ENCODE measurements at regions of chr1 and their contacts with region 1.

Region 1: GRCh38 chr1:65067491-65068201 is 80.4 kb upstream of the AK4 start:
- DNase-seq: peak; percentile 56
- ATAC-seq: peak; percentile 30
- H3K4me3 ChIP-seq: peak overlapping the region; percentile 58
- H3K27ac ChIP-seq: peak overlapping the region; percentile 51
- H3K4me1 ChIP-seq: peaks cover 4% of the 10 kb centered on the region; the same call in 1 of the 2 replicates
- H3K27me3 ChIP-seq: peaks cover 5% of the 10 kb centered on the region; the same call in 1 of the 2 replicates
- CTCF ChIP-seq: no peak
- POLR2A ChIP-seq: no peak
- RAD21 ChIP-seq: no peak

Region 2: DNA sequence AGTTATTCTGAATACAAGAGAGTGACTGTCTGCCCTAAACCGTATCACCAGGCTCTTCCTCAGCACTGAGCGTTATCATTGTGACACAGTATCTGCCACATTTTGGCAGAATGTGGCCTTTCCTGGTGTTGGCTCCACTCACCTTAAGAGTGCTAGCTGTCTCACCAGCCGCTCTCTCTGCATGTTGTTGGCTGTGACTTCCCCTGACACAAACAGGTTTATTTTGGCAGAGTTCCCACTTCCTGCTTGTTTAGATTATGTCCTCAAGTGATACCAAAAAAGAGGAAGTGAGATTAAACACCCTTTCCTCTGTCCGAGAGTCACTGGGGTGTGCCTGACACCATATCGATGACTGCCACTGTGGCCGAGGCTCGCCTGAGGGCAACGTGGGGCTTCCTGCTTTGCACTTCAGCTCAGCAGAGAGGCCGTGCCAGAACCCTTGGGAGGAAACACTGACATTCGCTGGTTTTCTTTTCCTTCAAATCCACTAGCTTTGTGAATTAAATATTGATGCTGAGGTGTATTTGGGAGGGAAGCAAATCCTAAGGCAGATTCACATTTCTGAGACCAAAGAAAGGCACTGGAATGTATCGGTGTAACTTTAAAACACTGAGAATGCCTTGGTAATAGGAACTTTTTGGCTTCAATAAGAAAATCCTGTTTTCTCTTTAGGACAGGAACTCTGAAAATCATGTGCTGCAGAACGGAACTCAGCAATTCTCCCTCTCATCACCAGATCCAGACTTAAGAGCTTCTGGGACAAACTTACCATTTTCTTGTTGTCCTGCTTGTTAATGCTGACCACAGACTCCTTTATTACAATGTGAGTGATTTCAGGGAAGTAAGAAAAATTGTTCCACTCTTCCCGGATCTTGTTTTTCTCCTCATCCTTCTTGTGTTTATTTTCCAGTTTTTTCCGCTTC is 203.4 kb before region 1 on chr1:
- CTCF ChIA-PET with region 1: no interaction called
- POLR2A ChIA-PET with region 1: no interaction called
- dilution Hi-C with region 1: no loop called
- in situ Hi-C with region 1: no loop called
- intact Hi-C with region 1: loop called (anchors 5 kb)
- DNase-seq: no peak
- ATAC-seq: no peak
- H3K4me3 ChIP-seq: no peak overlapping the region
- H3K27ac ChIP-seq: no peak overlapping the region
- H3K4me1 ChIP-seq: no peaks in the 10 kb centered on the region
- H3K27me3 ChIP-seq: no peaks in the 10 kb centered on the region
- CTCF ChIP-seq: no peak
- POLR2A ChIP-seq: no peak
- RAD21 ChIP-seq: no peak

Region 3: GRCh38 chr1:65108025-65108642 is 40.5 kb after region 1 on chr1:
- CTCF ChIA-PET with region 1: no interaction called
- POLR2A ChIA-PET with region 1: no interaction called
- dilution Hi-C with region 1: no loop called
- in situ Hi-C with region 1: no loop called
- intact Hi-C with region 1: no loop called
- DNase-seq: no peak
- ATAC-seq: no peak
- H3K4me3 ChIP-seq: no peak overlapping the region
- H3K27ac ChIP-seq: no peak overlapping the region
- H3K4me1 ChIP-seq: no peaks in the 10 kb centered on the region
- H3K27me3 ChIP-seq: peaks cover 1% of the 10 kb centered on the region; the same call in 1 of the 2 replicates
- CTCF ChIP-seq: no peak
- POLR2A ChIP-seq: no peak
- RAD21 ChIP-seq: no peak

Region 4: DNA sequence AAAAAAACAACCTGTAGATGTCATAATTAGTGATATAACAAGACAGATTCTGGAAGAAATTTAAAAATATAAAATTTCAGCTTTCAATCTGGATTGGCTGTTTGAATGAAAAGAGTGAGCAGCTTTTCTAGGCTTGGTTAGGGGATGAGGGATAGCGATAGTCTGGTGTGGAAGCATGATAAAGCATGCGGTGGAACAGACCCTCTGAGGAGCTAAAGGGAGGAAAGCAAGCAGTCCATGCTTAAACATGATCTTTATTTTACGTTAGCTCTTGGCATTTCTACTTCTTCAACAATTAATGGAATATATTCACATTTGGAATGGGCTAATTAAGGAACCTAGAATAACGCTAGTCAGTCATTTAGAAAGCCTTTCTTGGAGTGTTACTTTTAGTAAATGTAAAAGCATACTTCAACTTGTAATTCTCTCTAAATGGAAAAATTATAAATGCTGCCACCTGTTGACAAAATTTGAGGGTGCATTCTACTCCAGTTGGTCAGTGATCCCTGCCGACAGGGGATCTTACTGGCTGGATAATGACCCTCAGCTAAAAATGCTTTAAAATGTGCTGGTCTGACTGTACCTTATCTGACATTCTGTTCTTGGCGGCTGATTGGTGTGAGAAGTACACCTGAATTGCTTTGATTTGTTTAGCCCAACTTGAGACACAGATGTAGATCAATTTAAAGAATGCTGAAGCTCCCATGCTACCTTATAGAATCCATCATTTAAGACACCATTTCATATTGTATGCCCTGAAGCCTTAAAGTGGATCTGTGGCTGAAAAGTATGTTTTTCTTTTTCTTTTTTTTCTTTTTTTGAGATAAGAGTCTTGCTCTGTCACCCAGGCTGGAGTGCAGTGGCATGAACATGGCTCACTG is 141.6 kb after region 1 on chr1:
- CTCF ChIA-PET with region 1: interaction called, 3 read pairs
- POLR2A ChIA-PET with region 1: no interaction called
- dilution Hi-C with region 1: no loop called
- in situ Hi-C with region 1: loop called (anchors 5 kb)
- intact Hi-C with region 1: no loop called
- DNase-seq: peak; percentile 47
- ATAC-seq: peak; percentile 81
- H3K4me3 ChIP-seq: no peak overlapping the region
- H3K27ac ChIP-seq: no peak overlapping the region
- H3K4me1 ChIP-seq: no peaks in the 10 kb centered on the region; the same call in 1 of the 2 replicates
- H3K27me3 ChIP-seq: no peaks in the 10 kb centered on the region
- CTCF ChIP-seq: peak; percentile 62
- POLR2A ChIP-seq: no peak
- RAD21 ChIP-seq: peak; percentile 47

Region 5: GRCh38 chr1:65419681-65420589 is 352.3 kb after region 1 on chr1:
- CTCF ChIA-PET with region 1: no interaction called
- POLR2A ChIA-PET with region 1: no interaction called
- dilution Hi-C with region 1: no loop called
- in situ Hi-C with region 1: loop called (anchors 10 kb)
- intact Hi-C with region 1: no loop called
- DNase-seq: peak; percentile 97
- ATAC-seq: peak; percentile 95
- H3K4me3 ChIP-seq: peak overlapping the region; percentile 67
- H3K27ac ChIP-seq: peak overlapping the region; percentile 78
- H3K4me1 ChIP-seq: peaks cover 12% of the 10 kb centered on the region
- H3K27me3 ChIP-seq: no peaks in the 10 kb centered on the region
- CTCF ChIP-seq: no peak
- POLR2A ChIP-seq: no peak
- RAD21 ChIP-seq: no peak

Region 6: DNA sequence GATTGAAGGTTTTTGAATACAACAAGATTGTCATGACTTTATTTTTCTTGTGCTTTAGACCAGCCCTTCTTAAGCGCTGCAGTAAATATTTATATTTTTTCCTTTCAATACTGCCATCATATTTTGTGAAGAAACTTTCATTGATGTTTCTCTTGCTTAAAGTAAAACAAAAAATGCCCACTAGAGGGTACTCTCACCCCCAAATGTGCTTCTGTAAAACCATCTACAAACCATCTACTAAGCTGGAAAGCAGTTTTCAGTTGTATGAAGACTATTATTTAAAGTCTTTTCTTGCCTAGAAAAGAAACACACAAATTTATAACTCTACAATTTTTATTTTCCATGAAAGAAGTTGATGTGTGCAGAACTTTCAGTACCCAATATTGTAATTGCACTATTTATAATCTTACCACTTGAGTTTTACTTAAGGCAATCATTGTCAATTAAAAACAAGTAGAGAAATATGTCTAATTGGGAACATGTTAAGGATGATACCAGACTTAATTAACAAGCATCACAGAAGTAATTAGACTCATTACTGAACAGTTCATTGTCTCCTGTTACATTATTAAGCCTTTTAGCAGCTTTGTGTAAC is 363.6 kb after region 1 on chr1:
- CTCF ChIA-PET with region 1: no interaction called
- POLR2A ChIA-PET with region 1: no interaction called
- dilution Hi-C with region 1: no loop called
- in situ Hi-C with region 1: loop called (anchors 10 kb)
- intact Hi-C with region 1: loop called (anchors 5 kb)
- DNase-seq: peak; percentile 55
- ATAC-seq: peak; percentile 53
- H3K4me3 ChIP-seq: no peak overlapping the region
- H3K27ac ChIP-seq: no peak overlapping the region
- H3K4me1 ChIP-seq: peaks cover 2% of the 10 kb centered on the region; the same call in 1 of the 2 replicates
- H3K27me3 ChIP-seq: no peaks in the 10 kb centered on the region
- CTCF ChIP-seq: peak; percentile 59
- POLR2A ChIP-seq: no peak
- RAD21 ChIP-seq: peak; percentile 62

Measured in IMR-90 (cell line).